ENCODE measurements at regions of chr15 and their contacts with region 1.

Region 1: DNA sequence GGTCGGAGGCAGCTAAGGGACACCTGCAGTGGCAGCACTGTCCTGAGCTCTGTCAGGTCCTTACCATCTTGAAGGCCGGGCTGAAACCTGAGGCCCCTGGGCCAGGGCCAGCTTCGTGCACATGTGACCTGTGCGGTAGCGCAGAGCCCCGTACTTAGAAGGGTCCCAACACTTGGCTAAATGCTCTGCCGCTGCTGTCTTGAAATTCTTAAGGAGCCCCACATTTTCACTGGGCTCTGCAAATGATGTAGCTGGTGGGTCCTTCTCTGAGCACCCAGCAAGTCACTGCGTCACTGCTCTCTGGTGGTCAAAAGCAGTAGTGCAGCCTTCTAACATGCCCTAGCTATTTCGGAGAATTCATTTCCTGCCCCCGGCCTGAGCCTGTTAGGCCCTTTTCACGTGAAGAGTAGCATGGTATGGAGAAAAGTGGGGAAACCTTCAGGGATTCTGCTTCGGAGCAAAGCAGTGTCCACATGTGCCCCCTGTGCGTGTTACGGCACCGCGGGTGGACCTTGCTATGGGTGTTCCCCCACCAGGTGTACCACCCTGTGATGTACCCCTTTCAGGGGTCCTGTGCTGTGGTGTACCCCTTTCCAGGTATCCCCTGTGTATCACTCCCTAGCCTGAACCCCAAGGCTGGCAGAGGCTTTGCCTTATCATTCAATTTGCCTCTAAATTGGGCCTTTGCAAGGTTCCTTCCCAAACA is 79.7 kb downstream of the TMEM266 start:
- DNase-seq: peak; percentile 90
- ATAC-seq: peak; percentile 94
- H3K4me3 Mint-ChIP-seq: peak overlapping the region; percentile 13; the same call in 1 of the 2 replicates
- H3K27ac Mint-ChIP-seq: no peak overlapping the region; the same call in 1 of the 2 replicates
- H3K4me1 Mint-ChIP-seq: peaks cover 24% of the 10 kb centered on the region
- H3K27me3 Mint-ChIP-seq: no peaks in the 10 kb centered on the region; the same call in 1 of the 2 replicates
- CTCF ChIP-seq: peak; percentile 93

Region 2: DNA sequence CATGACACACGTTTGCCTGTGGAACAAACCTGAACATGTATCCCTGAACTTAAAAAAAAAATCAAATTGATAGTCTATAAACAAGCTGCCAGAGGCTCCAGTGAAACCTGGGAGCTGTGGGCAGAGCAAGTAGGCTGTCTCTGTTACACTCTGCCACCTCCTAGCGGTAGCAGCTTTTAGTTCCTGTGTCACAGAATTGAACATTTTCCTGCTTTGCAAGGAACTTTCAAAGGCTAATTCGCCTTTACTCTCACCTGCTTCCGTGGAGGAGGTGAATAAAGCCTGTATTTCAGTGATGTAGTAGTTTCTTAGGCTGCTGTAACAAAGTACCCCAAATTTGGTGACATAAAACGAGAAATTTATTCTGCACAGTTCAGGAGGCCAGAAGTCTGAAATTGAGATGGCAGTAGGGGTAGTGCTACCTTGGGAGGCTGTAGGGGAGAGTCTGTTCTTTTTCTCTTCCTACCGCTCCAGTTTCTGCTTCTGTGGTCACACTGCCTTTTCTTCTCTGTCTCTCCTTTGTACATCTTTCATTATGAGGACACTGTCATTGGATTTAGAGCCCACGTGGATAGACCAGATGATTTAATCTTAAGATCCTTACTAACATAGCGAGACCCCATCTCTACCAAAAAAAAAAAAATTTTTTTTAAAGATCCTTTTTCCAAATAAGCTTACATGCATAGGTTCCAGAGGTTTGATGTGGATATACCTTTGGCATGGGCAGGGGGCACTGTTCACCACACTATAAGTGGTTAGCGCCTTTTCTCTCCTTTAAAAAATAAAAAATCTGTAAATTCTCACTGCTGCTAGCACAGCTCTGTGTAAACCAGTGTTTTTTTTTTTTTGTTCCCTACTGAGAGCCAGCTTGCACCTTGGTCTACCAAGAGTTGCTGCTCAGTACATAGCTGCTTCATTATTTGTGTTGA is 210.6 kb before region 1 on chr15:
- CTCF ChIA-PET with region 1: interaction called, 73 read pairs
- POLR2A ChIA-PET with region 1: interaction called, 3 read pairs
- DNase-seq: peak; percentile 66
- ATAC-seq: peak; percentile 86
- H3K4me3 Mint-ChIP-seq: no peak overlapping the region
- H3K27ac Mint-ChIP-seq: peak overlapping the region; percentile 82
- H3K4me1 Mint-ChIP-seq: peaks cover 44% of the 10 kb centered on the region
- H3K27me3 Mint-ChIP-seq: no peaks in the 10 kb centered on the region
- CTCF ChIP-seq: peak; percentile 19

Region 3: GRCh38 chr15:75966073-75966472 is 173.4 kb before region 1 on chr15:
- CTCF ChIA-PET with region 1: interaction called, 10 read pairs
- POLR2A ChIA-PET with region 1: no interaction called
- DNase-seq: no peak
- ATAC-seq: no peak
- H3K4me3 Mint-ChIP-seq: no peak overlapping the region
- H3K27ac Mint-ChIP-seq: no peak overlapping the region
- H3K4me1 Mint-ChIP-seq: peaks cover 10% of the 10 kb centered on the region
- H3K27me3 Mint-ChIP-seq: no peaks in the 10 kb centered on the region
- CTCF ChIP-seq: no peak

Region 4: DNA sequence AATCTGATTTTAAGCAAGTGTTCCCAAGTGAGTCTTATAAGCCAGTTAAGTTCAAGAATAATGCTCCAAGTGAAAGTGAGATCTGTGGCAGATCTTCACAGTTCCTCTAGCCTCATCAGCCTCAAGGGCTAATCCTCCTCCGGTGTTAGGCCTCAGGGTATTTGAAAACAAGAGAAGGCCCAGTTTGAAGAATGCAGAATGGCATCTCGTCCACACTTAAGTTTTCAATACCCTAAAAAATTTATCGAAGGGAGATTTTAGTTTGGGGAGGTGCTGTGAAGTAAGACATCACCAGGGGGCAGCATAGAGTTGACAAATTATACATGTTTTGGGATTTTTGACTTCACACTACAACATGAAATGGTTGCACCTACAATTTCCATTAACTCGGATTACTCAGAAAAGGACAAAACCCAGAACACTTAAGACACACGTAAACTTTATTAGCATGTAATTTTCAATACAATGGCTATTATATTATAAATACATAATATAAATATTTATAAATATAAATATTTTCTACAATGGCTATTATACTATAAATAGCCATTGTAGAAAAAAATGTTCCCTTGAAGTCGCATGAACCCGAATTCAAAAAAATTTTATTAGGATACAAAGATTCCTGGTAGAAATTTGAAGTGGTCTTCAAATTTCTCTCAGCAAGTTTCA is 82.1 kb before region 1 on chr15:
- CTCF ChIA-PET with region 1: interaction called, 250 read pairs
- POLR2A ChIA-PET with region 1: interaction called, 7 read pairs
- DNase-seq: peak; percentile 26
- ATAC-seq: no peak
- H3K4me3 Mint-ChIP-seq: peak overlapping the region; percentile 35
- H3K27ac Mint-ChIP-seq: no peak overlapping the region
- H3K4me1 Mint-ChIP-seq: peaks cover 39% of the 10 kb centered on the region
- H3K27me3 Mint-ChIP-seq: peaks cover 16% of the 10 kb centered on the region
- CTCF ChIP-seq: peak; percentile 59

Region 5: DNA sequence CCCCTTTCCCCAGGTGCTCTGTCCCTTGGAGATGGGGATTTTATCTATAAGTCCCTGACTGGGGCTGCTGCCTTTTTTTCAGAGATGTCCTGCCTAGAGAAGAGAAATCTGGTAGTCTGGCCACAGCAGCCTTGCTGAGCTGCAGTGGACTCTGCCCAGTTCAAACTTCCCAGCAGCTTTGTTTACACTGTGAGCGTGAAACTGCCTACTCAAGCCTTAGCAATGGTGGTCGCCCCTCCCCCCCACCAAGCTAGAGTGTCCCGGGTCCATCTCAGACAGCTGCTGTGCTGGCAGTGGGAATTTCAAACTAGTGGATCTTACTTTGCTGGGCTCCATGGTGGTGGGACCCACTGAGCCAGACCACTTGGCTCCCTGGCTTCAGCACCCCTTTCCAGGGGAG is 40.8 kb before region 1 on chr15:
- CTCF ChIA-PET with region 1: interaction called, 16 read pairs
- POLR2A ChIA-PET with region 1: no interaction called
- DNase-seq: no peak
- ATAC-seq: no peak; the same call in 1 of the 2 replicates
- H3K4me3 Mint-ChIP-seq: no peak overlapping the region
- H3K27ac Mint-ChIP-seq: no peak overlapping the region
- H3K4me1 Mint-ChIP-seq: 0 out of 2 replicates have a peak, but pooled peaks cover 7% of the 10 kb centered on the region
- H3K27me3 Mint-ChIP-seq: no peaks in the 10 kb centered on the region
- CTCF ChIP-seq: no peak

Region 6: GRCh38 chr15:76115888-76116885 is 23.3 kb before region 1 on chr15:
- CTCF ChIA-PET with region 1: interaction called, 80 read pairs
- POLR2A ChIA-PET with region 1: interaction called, 3 read pairs
- DNase-seq: peak; percentile 68
- ATAC-seq: peak; percentile 97
- H3K4me3 Mint-ChIP-seq: peak overlapping the region; percentile 48
- H3K27ac Mint-ChIP-seq: peak overlapping the region; percentile 86
- H3K4me1 Mint-ChIP-seq: peaks cover 20% of the 10 kb centered on the region
- H3K27me3 Mint-ChIP-seq: no peaks in the 10 kb centered on the region
- CTCF ChIP-seq: no peak

Region 7: DNA sequence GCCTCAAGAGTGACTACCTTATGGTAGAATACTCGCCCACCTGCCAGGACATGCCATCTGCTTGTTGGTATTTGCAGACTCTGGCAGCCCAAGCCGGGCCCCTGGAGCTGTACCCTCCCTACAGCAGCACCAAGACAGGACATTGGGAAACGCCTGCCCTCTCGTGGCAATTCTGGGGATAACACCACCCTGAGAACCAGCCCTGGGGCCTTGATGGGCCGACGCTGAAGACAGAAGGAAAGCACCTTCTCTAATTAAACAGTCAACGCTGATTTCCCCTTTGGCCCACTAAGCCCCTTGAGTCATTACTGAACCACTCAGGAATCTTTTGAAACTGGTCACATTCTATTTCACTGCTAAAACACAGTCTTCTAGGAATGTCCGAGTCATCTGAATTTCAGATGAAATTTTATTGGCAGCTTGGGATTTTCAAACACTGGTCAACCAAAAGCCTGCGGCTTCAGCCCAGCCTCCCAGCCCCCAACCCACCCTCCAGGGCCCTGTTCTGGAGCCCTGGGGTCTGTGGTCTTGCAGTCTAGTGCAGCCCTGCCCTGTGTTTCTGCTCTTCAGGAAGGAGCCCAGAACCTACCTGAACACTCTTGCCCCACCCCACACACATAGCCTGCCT is 11.6 kb after region 1 on chr15:
- CTCF ChIA-PET with region 1: interaction called, 113 read pairs
- POLR2A ChIA-PET with region 1: no interaction called
- DNase-seq: peak; percentile 90
- ATAC-seq: peak; percentile 83
- H3K4me3 Mint-ChIP-seq: peak overlapping the region; percentile 24
- H3K27ac Mint-ChIP-seq: peak overlapping the region; percentile 79
- H3K4me1 Mint-ChIP-seq: peaks cover 47% of the 10 kb centered on the region
- H3K27me3 Mint-ChIP-seq: no peaks in the 10 kb centered on the region
- CTCF ChIP-seq: peak; percentile 92

Region 8: GRCh38 chr15:76401285-76401684 is 261.8 kb after region 1 on chr15:
- CTCF ChIA-PET with region 1: no interaction called
- POLR2A ChIA-PET with region 1: no interaction called
- DNase-seq: no peak
- ATAC-seq: no peak
- H3K4me3 Mint-ChIP-seq: no peak overlapping the region
- H3K27ac Mint-ChIP-seq: no peak overlapping the region
- H3K4me1 Mint-ChIP-seq: peaks cover 21% of the 10 kb centered on the region
- H3K27me3 Mint-ChIP-seq: no peaks in the 10 kb centered on the region
- CTCF ChIP-seq: no peak

Measured in WTC11 (cell line).